ENCODE measurements at regions of chr6 and their contacts with region 1.

Region 1: GRCh38 chr6:1596088-1596852 is 13.4 kb upstream of the FOXC1 start:
- DNase-seq: no peak
- H3K4me3 ChIP-seq: peak overlapping the region; percentile 49
- CTCF ChIP-seq: peak; percentile 88

Region 2: GRCh38 chr6:1574083-1574761 is 22.0 kb before region 1 on chr6:
- CTCF ChIA-PET with region 1: interaction called, 13 read pairs
- POLR2A ChIA-PET with region 1: no interaction called
- DNase-seq: no peak
- H3K4me3 ChIP-seq: no peak overlapping the region
- CTCF ChIP-seq: no peak

Region 3: DNA sequence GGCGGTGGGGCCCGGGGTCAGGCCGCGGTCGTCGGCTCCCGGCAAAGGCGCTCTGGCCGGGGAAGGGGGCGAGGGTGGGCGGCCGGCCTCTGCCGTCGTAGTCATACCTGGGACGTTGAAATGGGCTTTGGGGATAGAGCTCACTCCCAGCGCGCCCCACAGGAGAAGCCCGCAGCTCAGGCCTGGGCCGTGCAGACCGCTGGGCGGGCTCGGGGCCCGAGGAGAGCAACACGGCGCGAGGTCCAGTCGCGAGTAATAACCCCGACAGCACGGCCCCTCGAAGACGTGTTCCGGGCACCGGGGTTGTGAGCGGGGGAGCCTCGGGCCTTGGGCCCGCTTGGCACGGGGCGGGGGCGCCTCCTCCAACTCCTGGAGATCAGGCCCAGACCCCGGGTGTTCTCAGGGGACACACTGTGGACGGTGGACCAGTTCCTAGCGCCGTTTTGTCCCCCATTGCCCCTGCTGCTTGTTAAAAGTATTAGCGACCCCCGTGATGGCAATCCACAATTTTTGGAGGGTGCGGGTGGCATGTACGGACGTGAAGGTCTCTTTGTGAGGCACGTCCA is 24.3 kb after region 1 on chr6:
- CTCF ChIA-PET with region 1: no interaction called
- POLR2A ChIA-PET with region 1: no interaction called
- DNase-seq: no peak
- H3K4me3 ChIP-seq: no peak overlapping the region
- CTCF ChIP-seq: no peak

Region 4: DNA sequence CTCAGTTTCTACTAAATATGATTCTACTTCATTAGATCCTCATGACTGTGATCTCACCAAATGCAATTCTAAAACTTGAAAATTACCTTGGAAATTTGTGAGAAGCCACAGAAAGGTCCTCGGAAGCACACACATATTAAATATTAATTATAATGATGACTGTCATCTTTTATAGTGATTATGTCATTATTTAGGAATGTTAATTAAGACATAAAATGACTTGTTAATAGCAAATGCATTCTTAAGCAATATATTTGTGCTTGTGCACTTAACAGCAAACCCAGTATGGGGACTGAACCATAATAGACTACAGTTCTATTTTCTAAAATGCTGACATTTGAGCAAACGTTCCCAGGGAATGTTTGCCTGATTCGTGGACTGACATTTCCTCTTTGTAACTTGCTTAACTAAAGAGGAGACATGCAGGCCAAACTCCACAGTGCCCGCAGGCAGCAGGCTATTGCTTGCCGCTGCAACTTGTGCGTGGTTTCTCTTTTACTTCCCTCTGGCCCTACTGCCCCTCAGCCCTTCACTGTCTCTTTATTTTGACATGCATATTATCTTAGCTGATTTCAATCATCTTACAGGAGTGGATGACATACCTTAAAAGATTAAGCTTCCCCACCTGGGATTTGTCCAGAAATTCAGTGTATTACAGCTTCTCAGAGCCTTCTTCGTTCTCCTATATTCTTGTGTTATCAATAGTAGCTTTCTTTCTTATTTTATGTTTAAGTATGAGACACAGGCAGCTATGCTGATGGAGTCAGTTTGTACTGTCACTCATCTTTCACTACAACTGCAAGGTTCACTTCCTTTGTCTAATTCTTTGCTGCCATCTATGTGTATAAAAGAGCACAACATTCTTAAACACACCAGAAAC is 507.6 kb after region 1 on chr6:
- CTCF ChIA-PET with region 1: interaction called, 32 read pairs
- POLR2A ChIA-PET with region 1: no interaction called
- DNase-seq: no peak
- H3K4me3 ChIP-seq: no peak overlapping the region
- CTCF ChIP-seq: peak; percentile 40

Region 5: GRCh38 chr6:2448820-2449571 is 852.7 kb after region 1 on chr6:
- CTCF ChIA-PET with region 1: interaction called, 37 read pairs
- POLR2A ChIA-PET with region 1: no interaction called
- DNase-seq: peak; percentile 40
- H3K4me3 ChIP-seq: peak overlapping the region; percentile 51
- CTCF ChIP-seq: peak; percentile 81

Region 6: GRCh38 chr6:2695454-2696095 is 1099.3 kb after region 1 on chr6:
- CTCF ChIA-PET with region 1: interaction called, 53 read pairs
- POLR2A ChIA-PET with region 1: no interaction called
- DNase-seq: no peak
- H3K4me3 ChIP-seq: no peak overlapping the region
- CTCF ChIP-seq: no peak

Region 7: DNA sequence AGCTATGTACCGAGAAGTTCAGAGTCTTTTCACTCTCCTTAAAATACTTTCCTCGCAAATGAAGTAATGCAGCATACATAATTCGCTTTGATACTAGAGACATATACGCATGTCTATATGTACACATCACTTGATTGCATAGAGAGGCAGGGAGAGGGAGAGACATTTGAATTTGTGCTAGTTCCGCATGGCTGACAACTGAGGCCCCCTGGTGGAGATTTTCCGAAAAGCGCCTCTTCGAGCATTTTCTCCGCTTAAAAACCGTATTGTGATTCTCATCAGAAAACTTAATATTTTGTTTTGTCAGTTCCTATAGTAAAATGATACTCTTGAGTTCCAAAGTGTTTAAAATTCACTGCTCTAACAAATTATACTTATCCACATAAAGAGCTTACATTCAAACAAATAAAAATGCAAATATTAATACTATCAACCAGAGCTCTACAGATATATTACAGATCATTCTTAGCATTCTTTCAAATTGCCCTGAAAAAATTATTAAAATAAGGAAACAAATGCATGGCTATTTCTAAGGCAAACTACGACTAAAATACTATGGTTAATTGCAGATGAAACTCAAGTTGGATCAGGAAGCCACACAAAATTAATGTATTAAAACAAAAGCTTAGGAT is 1153.8 kb after region 1 on chr6:
- CTCF ChIA-PET with region 1: interaction called, 106 read pairs
- POLR2A ChIA-PET with region 1: no interaction called
- DNase-seq: no peak
- H3K4me3 ChIP-seq: no peak overlapping the region
- CTCF ChIP-seq: peak; percentile 68